PC-9 (cell line): ENCODE measurements at regions of chr22 and their contacts with region 1.

Region 1: DNA sequence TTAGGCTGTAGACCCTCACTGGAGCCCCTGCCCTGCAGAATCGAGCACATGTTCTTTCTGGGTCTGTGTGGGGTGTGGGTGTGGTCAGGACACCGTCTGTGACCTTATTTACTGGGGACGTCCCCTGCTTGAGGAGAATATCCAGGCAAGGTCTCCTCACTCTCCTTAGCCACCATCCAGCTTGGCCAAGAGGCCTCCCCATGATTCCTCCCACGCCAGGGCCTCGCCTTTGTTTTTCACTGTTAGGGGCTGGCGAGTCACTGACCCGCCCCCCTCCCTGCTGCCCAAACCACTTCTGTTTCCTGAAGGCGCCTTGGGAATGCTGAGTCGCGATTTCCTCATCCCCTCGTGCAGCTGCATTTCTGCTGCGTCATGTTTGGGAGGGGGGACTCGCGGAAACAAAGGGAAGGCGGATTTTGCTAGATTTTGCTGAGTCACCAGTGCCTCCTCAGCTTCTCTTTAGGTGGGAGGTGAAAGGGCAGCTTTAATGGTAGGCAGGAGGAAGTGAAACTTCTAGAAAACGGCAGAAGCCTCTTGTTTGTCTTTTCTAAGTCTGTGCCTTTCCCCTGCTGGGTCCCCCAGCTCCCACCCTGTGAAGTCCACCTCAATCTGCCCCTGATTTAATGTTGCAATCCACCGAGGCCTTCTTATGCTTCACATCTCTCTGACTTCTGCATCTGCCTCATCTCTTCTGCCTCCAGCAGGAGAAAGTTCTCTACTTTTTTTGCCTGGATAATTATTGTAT is 4.0 kb upstream of the HMOX1 start:
- DNase-seq: peak; percentile 92 to 98
- H3K4me3 ChIP-seq: no peak overlapping the region
- H3K27ac ChIP-seq: peak overlapping the region; percentile 84
- H3K4me1 ChIP-seq: peaks cover 76% of the 10 kb centered on the region
- H3K27me3 ChIP-seq: no peaks in the 10 kb centered on the region
- CTCF ChIP-seq: no peak

Region 2: GRCh38 chr22:35299673-35300497 is 77.0 kb before region 1 on chr22 and contains the start of gene TOM1:
- CTCF ChIA-PET with region 1: no interaction called
- POLR2A ChIA-PET with region 1: interaction called, 4 read pairs
- intact Hi-C with region 1: loop called (anchors 10 kb)
- DNase-seq: peak; percentile 96
- H3K4me3 ChIP-seq: peak within 1 kb of the TSS; percentile 75
- H3K27ac ChIP-seq: peak within 1 kb of the TSS; percentile 91
- H3K4me1 ChIP-seq: peaks cover 30% of the 10 kb centered on the region
- H3K27me3 ChIP-seq: no peaks in the 10 kb centered on the region
- CTCF ChIP-seq: no peak
- total RNA-seq, gene TOM1: 43.6 and 45.1 TPM in 2 replicates

Region 3: DNA sequence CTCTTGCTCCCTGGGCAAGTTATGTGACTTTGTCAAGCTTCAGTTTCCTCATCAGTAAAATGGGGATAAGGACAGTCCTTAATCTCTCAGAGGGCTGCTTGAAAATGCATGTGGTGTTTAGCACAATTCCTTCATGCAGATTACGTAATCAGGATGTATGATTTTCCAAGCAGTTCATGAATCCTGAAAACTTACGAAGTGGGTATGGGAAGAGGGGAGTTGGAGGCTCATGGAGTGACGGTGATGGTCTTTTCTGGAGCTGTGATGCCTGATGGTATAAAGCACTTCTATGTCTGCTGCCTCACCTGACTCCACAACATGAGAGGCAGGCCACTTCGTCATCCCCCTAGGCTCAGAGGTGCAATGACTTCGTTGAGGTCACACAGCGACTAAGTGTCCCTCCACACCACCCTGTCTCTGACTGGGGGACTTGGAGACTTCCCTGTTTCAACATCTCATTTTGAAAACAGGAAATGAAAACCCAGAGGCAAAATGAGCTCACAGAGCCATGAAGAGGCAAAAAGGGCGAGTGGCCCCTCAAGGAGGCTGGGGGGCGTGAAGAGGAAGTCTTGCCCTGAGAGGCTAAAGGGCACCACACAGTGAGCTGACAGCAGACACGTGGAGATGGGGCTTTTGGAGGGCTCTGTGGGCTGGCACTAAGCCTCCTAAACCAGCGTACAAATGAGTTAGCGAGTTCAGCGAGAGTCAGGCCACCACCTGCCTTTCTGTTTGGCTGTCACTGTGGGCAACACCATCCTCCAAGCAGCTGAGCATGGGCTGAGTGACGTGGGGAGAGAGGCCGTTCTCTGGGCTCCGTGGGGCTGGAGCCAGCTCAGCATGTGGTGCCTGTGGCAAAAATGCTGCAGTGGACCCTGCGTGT is 33.1 kb after region 1 on chr22:
- CTCF ChIA-PET with region 1: no interaction called
- POLR2A ChIA-PET with region 1: interaction called, 13 read pairs
- intact Hi-C with region 1: no loop called
- DNase-seq: no peak
- H3K4me3 ChIP-seq: no peak overlapping the region
- H3K27ac ChIP-seq: no peak overlapping the region
- H3K4me1 ChIP-seq: no peaks in the 10 kb centered on the region
- H3K27me3 ChIP-seq: no peaks in the 10 kb centered on the region
- CTCF ChIP-seq: no peak

Region 4: DNA sequence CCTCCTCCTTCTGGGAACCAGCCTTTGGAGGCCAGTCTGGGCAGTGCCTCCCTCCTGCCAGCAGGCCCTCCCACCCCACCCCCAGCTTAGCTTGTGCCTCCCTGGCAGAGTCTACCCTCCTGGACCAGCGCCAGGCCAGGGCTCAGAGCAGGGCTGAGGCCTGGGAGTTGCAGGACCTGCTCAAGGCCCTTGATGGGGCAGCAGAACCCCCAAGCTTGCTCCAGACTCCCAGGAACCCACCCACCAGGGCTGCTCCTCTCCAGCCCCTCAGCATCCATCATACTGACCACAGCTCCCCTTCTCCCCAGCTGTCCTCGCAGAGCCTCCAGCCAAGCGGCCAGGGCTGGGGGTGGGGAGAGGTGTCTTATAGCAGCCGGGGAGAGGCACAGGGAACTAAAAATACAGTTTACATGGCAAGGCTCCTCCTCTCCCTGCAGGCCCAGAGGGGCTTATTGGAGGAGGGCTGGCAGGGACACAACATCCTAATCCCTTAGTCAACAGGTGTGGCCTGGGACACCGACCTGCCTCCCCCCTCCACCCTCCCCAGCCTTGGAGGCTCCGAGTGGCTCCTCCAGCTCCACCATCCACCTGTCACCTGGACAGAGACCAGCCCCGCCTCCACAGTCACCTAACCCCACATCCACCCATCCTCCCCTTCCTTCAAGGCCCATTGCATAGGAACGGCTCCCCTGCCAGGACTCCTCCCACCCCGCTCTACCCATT is 245.5 kb after region 1 on chr22:
- CTCF ChIA-PET with region 1: interaction called, 5 read pairs
- POLR2A ChIA-PET with region 1: interaction called, 3 read pairs
- intact Hi-C with region 1: loop called (anchors 5 kb)
- DNase-seq: peak; percentile 96 to 99
- H3K4me3 ChIP-seq: peak overlapping the region; percentile 48; the same call in 1 of the 2 replicates
- H3K27ac ChIP-seq: peak overlapping the region; percentile 83
- H3K4me1 ChIP-seq: peaks cover 44% of the 10 kb centered on the region
- H3K27me3 ChIP-seq: no peaks in the 10 kb centered on the region
- CTCF ChIP-seq: no peak

Region 5: GRCh38 chr22:36052505-36053270 is 675.8 kb after region 1 on chr22:
- CTCF ChIA-PET with region 1: no interaction called
- POLR2A ChIA-PET with region 1: no interaction called
- intact Hi-C with region 1: loop called (anchors 10 kb)
- DNase-seq: peak; percentile 84 to 99
- H3K4me3 ChIP-seq: peak overlapping the region; percentile 52
- H3K27ac ChIP-seq: peak overlapping the region; percentile 99
- H3K4me1 ChIP-seq: peaks cover 92% of the 10 kb centered on the region
- H3K27me3 ChIP-seq: no peaks in the 10 kb centered on the region
- CTCF ChIP-seq: no peak

Region 6: GRCh38 chr22:36481393-36482168 is 1104.7 kb after region 1 on chr22 and contains the start of gene TXN2:
- CTCF ChIA-PET with region 1: no interaction called
- POLR2A ChIA-PET with region 1: no interaction called
- intact Hi-C with region 1: no loop called
- DNase-seq: peak; percentile 90 to 95
- H3K4me3 ChIP-seq: peak within 1 kb of the TSS; percentile 70
- H3K27ac ChIP-seq: peak within 1 kb of the TSS; percentile 95
- H3K4me1 ChIP-seq: peaks cover 38% of the 10 kb centered on the region
- H3K27me3 ChIP-seq: no peaks in the 10 kb centered on the region
- CTCF ChIP-seq: no peak
- total RNA-seq, gene TXN2: 89.0 and 95.1 TPM in 2 replicates